ENCODE measurements at regions of chr6 and their contacts with region 1.

Region 1: GRCh38 chr6:137155830-137156229 is 17.6 kb downstream of the IL22RA2 start:
- DNase-seq: peak; percentile 63
- H3K4me3 Mint-ChIP-seq: peak overlapping the region; percentile 30
- H3K27ac Mint-ChIP-seq: peak overlapping the region; percentile 73
- H3K4me1 Mint-ChIP-seq: peaks cover 64% of the 10 kb centered on the region
- H3K27me3 Mint-ChIP-seq: peaks cover 9% of the 10 kb centered on the region

Region 2: DNA sequence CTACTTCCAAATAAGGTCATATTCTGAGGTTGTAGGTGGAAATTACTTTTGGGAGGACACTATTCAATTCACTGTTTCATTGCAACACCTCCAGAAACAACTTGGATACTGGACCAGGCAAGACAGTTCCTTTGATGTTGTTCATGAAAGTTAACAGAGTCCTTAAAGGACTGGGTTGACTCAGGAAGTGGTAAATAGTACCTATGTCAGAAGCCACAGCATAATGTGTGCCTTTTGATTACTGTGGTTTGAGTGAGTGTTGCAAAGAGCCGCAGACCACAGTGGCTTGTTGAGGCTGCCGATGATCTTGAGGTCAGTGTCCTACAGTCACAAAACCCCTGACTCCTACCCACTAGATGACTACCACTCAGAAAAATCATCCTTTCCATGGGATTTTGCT is 122.0 kb before region 1 on chr6:
- intact Hi-C with region 1: loop called (anchors 1 kb)
- DNase-seq: peak; percentile 61
- H3K4me3 Mint-ChIP-seq: no peak overlapping the region
- H3K27ac Mint-ChIP-seq: peak overlapping the region; percentile 20
- H3K4me1 Mint-ChIP-seq: peaks cover 19% of the 10 kb centered on the region
- H3K27me3 Mint-ChIP-seq: peaks cover 54% of the 10 kb centered on the region

Region 3: GRCh38 chr6:137102851-137103492 is 52.9 kb before region 1 on chr6:
- intact Hi-C with region 1: loop called (anchors 1 kb)
- DNase-seq: peak; percentile 57
- H3K4me3 Mint-ChIP-seq: peak overlapping the region; percentile 43
- H3K27ac Mint-ChIP-seq: peak overlapping the region; percentile 79
- H3K4me1 Mint-ChIP-seq: peaks cover 56% of the 10 kb centered on the region
- H3K27me3 Mint-ChIP-seq: no peaks in the 10 kb centered on the region

Region 4: GRCh38 chr6:137661601-137662000 is 505.8 kb after region 1 on chr6:
- intact Hi-C with region 1: no loop called
- DNase-seq: no peak
- H3K4me3 Mint-ChIP-seq: no peak overlapping the region
- H3K27ac Mint-ChIP-seq: no peak overlapping the region
- H3K4me1 Mint-ChIP-seq: peaks cover 58% of the 10 kb centered on the region
- H3K27me3 Mint-ChIP-seq: peaks cover 2% of the 10 kb centered on the region

Measured in activated T-helper 1 cell treated with anti-CD3 and anti-CD28 coated beads, Interleukin-12 subunit alpha, Interleukin-12 subunit beta, Interleukin-2, Interleukin-4 antibody, amounts not matched to agents 30 ng/mL and 10 ng/mL and 1 ng/mL, durations not matched to agents 14 hours and 24 hours and 36 hours (primary cell).